Common myeloid progenitor, CD34-positive (primary cell): ENCODE measurements at regions of chr12 and their contacts with region 1.

Region 1: DNA sequence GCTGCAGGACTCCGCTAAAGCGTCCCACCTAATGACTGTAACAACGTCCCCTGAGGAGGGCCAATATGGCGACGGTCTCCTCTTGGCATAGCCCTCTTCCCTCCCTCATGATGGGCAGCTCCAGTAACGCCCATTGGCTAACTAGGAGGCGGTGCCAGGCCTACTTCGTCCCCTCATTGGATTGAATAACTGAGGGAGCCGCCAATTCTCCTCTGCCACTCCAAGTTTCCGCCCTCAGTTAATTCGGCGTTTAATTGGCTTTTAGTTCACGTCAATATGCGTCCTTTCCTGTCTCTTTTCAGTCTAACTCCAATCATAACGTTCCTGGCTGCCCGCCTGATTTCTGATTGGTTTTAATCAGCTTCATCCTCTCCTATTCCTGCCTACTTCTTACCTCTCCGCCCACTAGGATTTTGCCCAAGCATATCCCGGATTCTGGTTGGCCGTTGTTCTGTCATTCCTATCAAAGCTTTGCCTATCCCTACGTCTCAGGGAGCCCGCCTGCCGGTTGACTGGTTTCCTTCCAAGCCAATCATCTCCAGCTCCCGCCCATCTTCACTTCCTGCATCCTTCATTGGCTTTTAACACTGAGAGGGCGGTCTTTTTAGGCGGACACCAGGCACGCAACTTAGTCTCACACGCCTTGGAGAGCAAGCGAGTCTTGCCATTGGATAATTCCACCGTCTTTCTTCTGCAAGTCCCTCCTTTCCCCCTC is 430 bp upstream of the SP1 start:
- DNase-seq: peak; percentile 100
- H3K4me3 ChIP-seq: peak overlapping the region; percentile 6 to 89 (median 70)
- H3K27ac ChIP-seq: peak overlapping the region; percentile 62 to 91
- H3K4me1 ChIP-seq: peaks cover 15 to 42% (median 37%) of the 10 kb centered on the region in 4 experiments
- H3K27me3 ChIP-seq: no peaks in the 10 kb centered on the region

Region 2: DNA sequence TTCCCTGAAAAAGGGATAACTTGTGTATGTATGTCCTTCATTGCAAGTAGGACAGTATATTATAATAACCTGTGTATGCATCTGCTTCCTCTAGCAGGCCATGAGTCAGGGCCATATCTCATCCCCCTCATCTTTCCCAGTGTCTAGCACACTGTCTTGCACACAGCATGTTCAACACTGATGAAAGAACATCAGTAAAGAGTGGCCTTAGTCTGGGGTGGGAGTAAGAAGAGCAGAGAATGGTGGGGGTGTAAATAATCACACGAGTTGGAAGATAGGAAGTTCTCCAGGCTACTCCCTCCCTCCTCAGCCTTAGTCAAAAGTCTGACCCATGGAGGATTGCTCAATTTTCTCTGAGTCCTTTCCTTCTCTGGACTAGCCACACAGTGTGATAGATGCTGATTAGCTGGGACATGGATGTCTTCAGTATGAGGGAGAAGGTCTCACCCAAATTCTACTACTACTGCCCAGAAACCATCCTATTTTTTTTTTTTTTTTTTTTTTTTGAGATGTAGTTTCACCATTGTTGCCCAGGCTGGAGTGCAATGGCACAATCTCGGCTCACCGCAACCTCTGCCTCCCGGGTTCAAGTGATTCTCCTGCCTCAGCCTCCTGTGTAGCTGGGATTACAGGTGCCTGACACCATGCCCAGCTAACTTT is 14.2 kb before region 1 on chr12:
- CTCF ChIA-PET with region 1: interaction called, 15 read pairs
- POLR2A ChIA-PET with region 1: interaction called, 5 read pairs
- DNase-seq: peak in 2 of 3 donors; percentile 35 to 53
- H3K4me3 ChIP-seq: no peak overlapping the region
- H3K27ac ChIP-seq: peak overlapping the region in 1 of 2 experiments; percentile 75
- H3K4me1 ChIP-seq: peaks cover 5 to 30% (median 26%) of the 10 kb centered on the region in 4 experiments
- H3K27me3 ChIP-seq: no peaks in the 10 kb centered on the region

Region 3: GRCh38 chr12:53414756-53415417 is 35.3 kb after region 1 on chr12:
- CTCF ChIA-PET with region 1: interaction called, 33 read pairs
- POLR2A ChIA-PET with region 1: no interaction called
- DNase-seq: no peak
- H3K4me3 ChIP-seq: no peak overlapping the region
- H3K27ac ChIP-seq: peak overlapping the region in 1 of 2 experiments; percentile 3
- H3K4me1 ChIP-seq: peaks cover 0 to 48% (median 31%) of the 10 kb centered on the region in 4 experiments
- H3K27me3 ChIP-seq: no peaks in the 10 kb centered on the region